B cell (primary cell): ENCODE measurements at regions of chr3 and their contacts with region 1.

Region 1: DNA sequence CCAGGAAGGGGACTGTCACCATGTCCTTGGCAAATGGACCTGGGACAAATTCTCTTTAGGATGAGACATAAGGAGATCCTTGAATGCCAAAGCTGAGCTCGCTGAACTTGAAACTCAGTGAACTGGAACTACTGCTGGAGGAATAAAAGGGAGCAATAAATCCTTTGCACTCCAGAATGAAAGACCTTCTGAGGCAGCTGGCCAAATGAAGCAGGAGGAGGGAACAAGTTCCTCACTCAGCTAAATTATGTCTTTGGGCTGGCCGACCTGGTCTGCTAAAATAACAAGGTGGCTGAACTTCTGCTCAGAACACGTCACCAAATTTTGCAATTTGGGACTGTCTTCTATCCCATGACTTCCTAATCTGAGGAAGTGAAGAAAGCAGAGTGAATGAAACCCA is 314.7 kb downstream of the LPP start:
- DNase-seq: no peak
- ATAC-seq: no peak
- H3K4me3 ChIP-seq: no peak overlapping the region
- H3K4me3 Mint-ChIP-seq: no peak overlapping the region
- H3K27ac ChIP-seq: no peak overlapping the region
- H3K27ac Mint-ChIP-seq: no peak overlapping the region
- H3K4me1 ChIP-seq: peaks cover 0 to 12% of the 10 kb centered on the region in 2 donors
- H3K4me1 Mint-ChIP-seq: peaks cover 32% of the 10 kb centered on the region
- H3K27me3 ChIP-seq: no peaks in the 10 kb centered on the region
- H3K27me3 Mint-ChIP-seq: no peaks in the 10 kb centered on the region
- CTCF ChIP-seq: no peak

Region 2: GRCh38 chr3:188455748-188456147 is 12.9 kb before region 1 on chr3:
- CTCF ChIA-PET with region 1: interaction called, 5 read pairs
- POLR2A ChIA-PET with region 1: no interaction called
- intact Hi-C with region 1: loop called (anchors 2 kb)
- DNase-seq: no peak
- ATAC-seq: no peak
- H3K4me3 ChIP-seq: no peak overlapping the region
- H3K4me3 Mint-ChIP-seq: no peak overlapping the region
- H3K27ac ChIP-seq: no peak overlapping the region
- H3K27ac Mint-ChIP-seq: no peak overlapping the region
- H3K4me1 ChIP-seq: peaks cover 21 to 22% of the 10 kb centered on the region in 2 donors
- H3K4me1 Mint-ChIP-seq: peaks cover 42% of the 10 kb centered on the region
- H3K27me3 ChIP-seq: no peaks in the 10 kb centered on the region
- H3K27me3 Mint-ChIP-seq: no peaks in the 10 kb centered on the region
- CTCF ChIP-seq: no peak